ENCODE measurements at regions of chr10 and their contacts with region 1.

Region 1: DNA sequence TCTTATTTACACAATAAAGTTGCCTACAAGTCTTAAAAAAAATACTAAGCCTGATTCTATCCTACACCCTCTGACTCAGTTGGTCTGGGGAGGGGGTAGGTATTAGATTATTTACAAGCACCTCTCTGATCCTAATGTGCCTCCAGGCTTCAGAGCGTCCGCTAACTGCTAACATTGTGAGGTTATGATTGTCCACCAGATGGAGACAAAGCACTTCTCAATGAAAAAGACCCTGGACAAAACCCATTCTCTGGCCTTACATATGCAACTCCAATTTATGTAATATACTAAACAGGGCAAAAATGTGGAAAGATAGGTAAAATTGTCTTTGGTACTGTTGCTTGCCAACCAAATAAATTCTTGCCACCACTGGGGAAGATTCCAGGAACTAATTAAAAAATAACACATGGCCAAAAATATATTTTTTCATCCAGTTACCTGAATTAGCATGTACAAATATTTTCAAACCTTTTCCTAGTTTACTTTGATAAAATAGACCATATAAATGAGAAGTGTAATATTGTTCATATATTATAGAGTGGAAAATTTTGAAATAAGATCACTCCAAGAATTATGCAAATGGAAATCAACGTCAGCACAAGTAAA is 92.4 kb downstream of the KIF20B start:
- DNase-seq: peak; percentile 46
- ATAC-seq: peak; percentile 65
- H3K4me3 Mint-ChIP-seq: no peak overlapping the region
- H3K27ac Mint-ChIP-seq: no peak overlapping the region
- H3K4me1 Mint-ChIP-seq: peaks cover 8% of the 10 kb centered on the region
- H3K27me3 Mint-ChIP-seq: peaks cover 22% of the 10 kb centered on the region

Region 2: DNA sequence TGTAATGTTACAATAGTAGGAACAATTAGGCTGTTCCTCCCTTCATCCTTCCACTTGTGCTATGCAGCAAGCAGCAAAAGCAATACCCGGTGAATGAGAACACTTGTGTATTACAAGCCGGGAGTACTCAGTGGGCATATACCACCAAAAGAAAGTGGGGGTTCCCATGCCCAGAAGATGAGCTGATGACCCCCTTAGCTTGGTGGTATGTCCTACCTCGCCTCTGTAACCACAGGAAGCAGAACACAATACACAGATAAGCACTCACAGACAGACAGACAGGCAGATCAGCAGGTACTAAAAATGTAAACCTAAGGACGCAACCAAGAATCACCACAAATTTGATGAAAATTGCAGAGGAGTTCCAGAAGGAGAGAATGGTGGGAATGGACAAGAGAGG is 107.8 kb before region 1 on chr10:
- CTCF ChIA-PET with region 1: no interaction called
- POLR2A ChIA-PET with region 1: no interaction called
- intact Hi-C with region 1: no loop called
- DNase-seq: no peak
- ATAC-seq: no peak
- H3K4me3 Mint-ChIP-seq: no peak overlapping the region
- H3K27ac Mint-ChIP-seq: no peak overlapping the region
- H3K4me1 Mint-ChIP-seq: no peaks in the 10 kb centered on the region
- H3K27me3 Mint-ChIP-seq: peaks cover 13% of the 10 kb centered on the region

Region 3: GRCh38 chr10:90138844-90139243 is 345.1 kb after region 1 on chr10:
- CTCF ChIA-PET with region 1: no interaction called
- POLR2A ChIA-PET with region 1: no interaction called
- intact Hi-C with region 1: loop called (anchors 1 to 2 kb)
- DNase-seq: no peak
- ATAC-seq: no peak
- H3K4me3 Mint-ChIP-seq: no peak overlapping the region
- H3K27ac Mint-ChIP-seq: no peak overlapping the region
- H3K4me1 Mint-ChIP-seq: no peaks in the 10 kb centered on the region
- H3K27me3 Mint-ChIP-seq: peaks cover 3% of the 10 kb centered on the region

Region 4: GRCh38 chr10:90592638-90593302 is 799.0 kb after region 1 on chr10:
- CTCF ChIA-PET with region 1: no interaction called
- POLR2A ChIA-PET with region 1: no interaction called
- intact Hi-C with region 1: loop called (anchors 1 to 5 kb)
- DNase-seq: peak; percentile 30
- ATAC-seq: no peak
- H3K4me3 Mint-ChIP-seq: no peak overlapping the region
- H3K27ac Mint-ChIP-seq: no peak overlapping the region
- H3K4me1 Mint-ChIP-seq: no peaks in the 10 kb centered on the region
- H3K27me3 Mint-ChIP-seq: peaks cover 7% of the 10 kb centered on the region

Region 5: DNA sequence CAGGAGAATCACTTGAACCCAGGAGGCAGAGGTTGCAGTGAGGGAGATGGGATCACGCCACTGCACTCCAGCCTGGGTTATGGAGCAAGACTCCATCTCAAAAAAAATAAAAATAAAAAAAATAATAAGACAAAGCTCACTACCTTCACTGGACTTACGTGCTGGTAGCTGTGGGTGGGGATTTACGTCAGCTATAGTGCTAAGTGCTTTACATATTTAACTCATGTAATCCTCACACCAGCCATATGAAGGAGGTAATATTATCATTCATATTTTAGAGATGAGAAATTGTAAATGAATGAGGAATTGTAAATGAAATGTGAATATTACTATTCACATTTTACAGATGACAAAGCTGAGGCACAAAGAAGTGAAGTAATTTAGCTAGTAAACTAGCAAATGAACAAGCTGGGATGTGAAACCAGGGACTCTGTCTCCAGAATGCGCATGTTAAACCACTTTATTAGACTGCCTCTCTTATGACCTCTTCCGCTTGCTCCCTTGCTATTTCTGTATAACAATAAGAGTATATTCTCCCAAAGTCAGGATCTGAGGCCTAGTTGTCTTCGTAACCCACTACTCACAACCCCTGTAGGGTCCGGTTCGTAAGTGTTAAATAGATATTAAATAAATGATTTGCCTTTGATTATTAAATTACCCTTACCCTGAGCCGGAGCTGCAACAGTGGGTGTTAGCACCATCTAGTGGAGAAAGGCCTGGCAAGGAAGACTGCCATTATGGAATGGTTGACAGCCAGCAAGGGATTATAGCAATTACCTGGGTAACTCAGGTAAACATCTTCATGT is 993.8 kb after region 1 on chr10:
- CTCF ChIA-PET with region 1: interaction called, 3 read pairs
- POLR2A ChIA-PET with region 1: no interaction called
- intact Hi-C with region 1: loop called (anchors 1 kb)
- DNase-seq: peak; percentile 48
- ATAC-seq: no peak
- H3K4me3 Mint-ChIP-seq: no peak overlapping the region
- H3K27ac Mint-ChIP-seq: no peak overlapping the region
- H3K4me1 Mint-ChIP-seq: no peaks in the 10 kb centered on the region
- H3K27me3 Mint-ChIP-seq: peaks cover 7% of the 10 kb centered on the region